MCF 10A (cell line): ENCODE measurements at regions of chr2 and their contacts with region 1.

Region 1: DNA sequence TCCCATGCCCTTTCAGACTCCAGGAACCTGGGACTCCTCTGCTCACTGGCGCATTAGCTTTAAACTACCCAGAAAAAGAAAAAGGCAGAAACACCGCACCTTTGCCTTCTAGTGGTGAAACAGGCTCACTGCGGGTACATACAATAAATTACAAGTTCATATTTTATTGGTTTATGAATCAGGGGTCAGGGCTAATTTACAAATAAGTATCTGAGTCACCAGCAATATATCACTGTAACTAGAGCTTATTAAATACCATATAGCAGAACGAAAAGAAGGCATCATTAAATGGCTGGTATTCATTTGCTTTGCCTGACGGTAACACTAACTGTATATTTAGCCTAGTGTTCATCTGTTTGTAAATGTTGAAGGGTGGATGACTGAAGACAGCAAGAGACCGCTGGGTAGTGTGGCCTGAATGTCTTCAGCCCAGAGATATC is 26.9 kb upstream of the DTNB start:
- DNase-seq: peak; percentile 70
- H3K4me3 Mint-ChIP-seq: no peak overlapping the region
- H3K27ac Mint-ChIP-seq: no peak overlapping the region
- H3K4me1 Mint-ChIP-seq: peaks cover 6% of the 10 kb centered on the region
- H3K27me3 Mint-ChIP-seq: no peaks in the 10 kb centered on the region
- CTCF ChIP-seq: peak; percentile 62

Region 2: GRCh38 chr2:25590921-25591505 is 109.2 kb before region 1 on chr2:
- CTCF ChIA-PET with region 1: interaction called, 10 read pairs
- POLR2A ChIA-PET with region 1: no interaction called
- intact Hi-C with region 1: no loop called
- DNase-seq: no peak
- H3K4me3 Mint-ChIP-seq: no peak overlapping the region
- H3K27ac Mint-ChIP-seq: no peak overlapping the region
- H3K4me1 Mint-ChIP-seq: peaks cover 15% of the 10 kb centered on the region
- H3K27me3 Mint-ChIP-seq: no peaks in the 10 kb centered on the region
- CTCF ChIP-seq: no peak

Region 3: DNA sequence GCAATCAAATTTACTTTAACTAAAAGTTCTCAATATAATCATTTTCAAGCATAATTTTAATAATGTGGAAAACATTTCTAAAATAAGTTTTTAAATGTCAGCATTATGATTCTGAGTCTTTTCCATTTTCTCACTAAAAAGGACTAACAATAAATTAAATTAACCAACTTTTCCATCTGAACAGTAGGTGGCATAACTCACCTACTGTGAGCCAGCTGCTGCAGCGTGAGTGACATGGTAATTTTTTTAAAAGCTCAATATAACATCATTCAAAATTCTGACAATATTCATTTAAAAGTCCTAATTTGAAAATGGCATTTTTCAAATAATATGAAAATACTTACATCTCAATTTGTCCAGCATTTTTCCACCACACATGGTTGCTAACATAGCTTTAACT is 93.3 kb before region 1 on chr2:
- CTCF ChIA-PET with region 1: interaction called, 204 read pairs
- POLR2A ChIA-PET with region 1: interaction called, 37 read pairs
- intact Hi-C with region 1: loop called (anchors 1 kb)
- DNase-seq: peak; percentile 57
- H3K4me3 Mint-ChIP-seq: no peak overlapping the region
- H3K27ac Mint-ChIP-seq: no peak overlapping the region
- H3K4me1 Mint-ChIP-seq: no peaks in the 10 kb centered on the region
- H3K27me3 Mint-ChIP-seq: no peaks in the 10 kb centered on the region
- CTCF ChIP-seq: peak; percentile 71

Region 4: DNA sequence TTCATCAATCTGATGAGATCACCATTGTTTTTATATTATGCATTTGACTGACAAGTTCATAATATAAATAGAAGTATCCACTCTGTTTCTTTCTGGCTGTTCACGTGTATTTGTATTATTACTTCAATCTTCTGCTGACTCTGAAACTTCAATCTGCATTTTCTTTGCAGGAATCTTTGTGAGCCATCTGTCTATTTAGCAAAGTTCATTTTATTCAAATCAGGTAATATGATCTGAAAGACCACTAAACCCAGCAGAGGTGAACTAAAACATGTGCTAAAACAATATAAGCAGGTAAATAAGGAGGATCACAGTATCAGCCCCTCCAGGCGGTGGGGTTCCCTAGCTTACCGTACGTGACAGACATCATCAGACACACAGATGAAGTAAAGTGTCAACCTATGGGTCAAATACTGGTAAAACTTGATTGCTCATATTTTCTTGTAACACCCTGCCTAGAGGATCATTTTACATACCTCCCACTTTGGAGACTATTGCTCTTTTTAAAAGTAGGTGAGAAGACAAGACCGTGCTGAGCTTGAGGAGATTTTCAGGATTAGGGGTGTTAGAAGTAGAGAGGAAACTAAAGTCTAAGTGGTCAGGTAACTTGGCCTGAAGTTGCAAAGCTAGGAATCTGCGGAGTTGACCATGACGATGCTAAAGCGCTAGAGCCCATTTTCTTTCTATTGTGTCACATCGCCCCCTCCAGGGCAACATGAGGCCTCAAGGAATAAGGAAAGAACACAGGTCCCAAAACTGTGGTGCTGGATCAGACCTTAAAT is 35.9 kb before region 1 on chr2:
- CTCF ChIA-PET with region 1: interaction called, 36 read pairs
- POLR2A ChIA-PET with region 1: interaction called, 3 read pairs
- intact Hi-C with region 1: no loop called
- DNase-seq: peak; percentile 88
- H3K4me3 Mint-ChIP-seq: peak overlapping the region; percentile 15
- H3K27ac Mint-ChIP-seq: peak overlapping the region; percentile 50
- H3K4me1 Mint-ChIP-seq: peaks cover 31% of the 10 kb centered on the region
- H3K27me3 Mint-ChIP-seq: no peaks in the 10 kb centered on the region
- CTCF ChIP-seq: peak; percentile 43

Region 5: DNA sequence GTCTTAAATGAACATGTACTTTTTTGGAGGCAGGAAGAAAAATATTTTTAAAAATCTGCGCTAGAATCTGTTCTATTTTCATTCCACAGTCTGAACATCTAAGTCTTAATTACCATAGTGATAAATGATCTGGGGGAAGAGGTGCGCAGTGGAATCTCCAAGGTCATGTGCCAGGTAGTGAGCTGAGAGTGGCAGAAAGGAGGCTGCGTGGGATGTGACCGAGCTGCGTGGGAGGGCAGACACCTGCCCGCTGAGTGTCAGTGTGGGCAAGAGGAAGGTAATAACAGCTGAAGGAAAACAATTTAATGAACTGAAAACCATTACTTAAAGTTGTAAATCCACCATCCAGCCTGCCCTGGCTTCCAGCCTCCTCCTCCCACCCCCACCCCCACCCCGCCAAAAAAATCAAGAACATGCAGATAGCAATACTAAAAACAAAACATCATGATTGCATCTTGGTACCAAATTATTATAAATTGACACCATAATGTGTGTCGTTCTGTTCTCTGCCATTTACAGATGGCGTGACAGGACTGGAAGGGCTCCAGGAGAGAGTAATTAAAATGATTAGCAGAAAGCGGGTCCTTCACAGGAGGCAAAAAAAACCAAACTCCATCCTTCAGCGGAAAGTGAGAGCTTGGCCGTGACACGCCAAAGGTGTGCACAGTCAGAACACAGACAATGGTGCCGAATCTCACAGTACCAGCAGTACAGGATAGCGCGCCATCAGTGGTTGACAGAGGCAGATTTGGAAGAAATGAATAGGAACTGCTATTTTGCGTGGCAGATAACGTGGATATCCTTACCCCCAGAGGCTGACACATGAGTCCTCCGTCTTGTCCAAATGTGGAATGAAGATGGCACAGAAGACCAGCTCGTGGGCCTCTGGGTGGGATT is 15.4 kb before region 1 on chr2:
- CTCF ChIA-PET with region 1: interaction called, 40 read pairs
- POLR2A ChIA-PET with region 1: interaction called, 11 read pairs
- intact Hi-C with region 1: no loop called
- DNase-seq: no peak
- H3K4me3 Mint-ChIP-seq: no peak overlapping the region
- H3K27ac Mint-ChIP-seq: no peak overlapping the region
- H3K4me1 Mint-ChIP-seq: peaks cover 4% of the 10 kb centered on the region
- H3K27me3 Mint-ChIP-seq: no peaks in the 10 kb centered on the region
- CTCF ChIP-seq: no peak

Region 6: DNA sequence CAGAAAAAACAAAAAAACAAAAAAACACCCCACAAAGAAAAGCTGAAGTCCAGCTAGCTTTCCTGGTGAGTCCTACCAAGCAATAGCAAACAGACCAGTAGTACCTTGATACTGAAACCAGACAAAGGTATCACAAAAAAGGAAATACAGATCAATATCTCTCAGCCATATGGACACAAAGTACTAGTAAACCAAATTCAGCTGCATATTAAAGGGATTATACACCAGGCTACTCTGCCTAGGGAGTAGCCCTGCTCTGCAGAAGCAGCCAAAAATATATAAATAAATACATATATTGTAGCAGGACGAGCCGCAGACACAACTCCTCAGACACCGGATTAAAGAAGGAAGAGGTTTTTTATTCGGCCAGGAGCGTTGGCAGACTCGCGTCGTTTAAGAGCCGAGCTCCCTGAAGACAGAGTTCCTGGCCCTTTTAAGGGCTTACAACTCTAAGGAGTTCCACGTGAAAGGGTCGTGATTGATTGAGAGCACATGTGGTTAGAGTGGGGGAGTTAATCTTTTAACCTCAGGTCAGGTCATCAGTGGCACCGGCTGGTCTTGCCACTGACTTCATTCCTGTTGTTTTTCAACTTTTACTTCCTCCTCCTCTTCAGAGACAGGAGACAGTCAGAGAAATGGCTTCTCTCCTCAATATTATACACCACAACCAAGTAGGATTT is 11.6 kb after region 1 on chr2:
- CTCF ChIA-PET with region 1: interaction called, 23 read pairs
- POLR2A ChIA-PET with region 1: interaction called, 3 read pairs
- intact Hi-C with region 1: no loop called
- DNase-seq: no peak
- H3K4me3 Mint-ChIP-seq: no peak overlapping the region
- H3K27ac Mint-ChIP-seq: no peak overlapping the region
- H3K4me1 Mint-ChIP-seq: no peaks in the 10 kb centered on the region
- H3K27me3 Mint-ChIP-seq: peaks cover 14% of the 10 kb centered on the region
- CTCF ChIP-seq: no peak